H1 (cell line): ENCODE measurements at regions of chr10 and their contacts with region 1.

Region 1: DNA sequence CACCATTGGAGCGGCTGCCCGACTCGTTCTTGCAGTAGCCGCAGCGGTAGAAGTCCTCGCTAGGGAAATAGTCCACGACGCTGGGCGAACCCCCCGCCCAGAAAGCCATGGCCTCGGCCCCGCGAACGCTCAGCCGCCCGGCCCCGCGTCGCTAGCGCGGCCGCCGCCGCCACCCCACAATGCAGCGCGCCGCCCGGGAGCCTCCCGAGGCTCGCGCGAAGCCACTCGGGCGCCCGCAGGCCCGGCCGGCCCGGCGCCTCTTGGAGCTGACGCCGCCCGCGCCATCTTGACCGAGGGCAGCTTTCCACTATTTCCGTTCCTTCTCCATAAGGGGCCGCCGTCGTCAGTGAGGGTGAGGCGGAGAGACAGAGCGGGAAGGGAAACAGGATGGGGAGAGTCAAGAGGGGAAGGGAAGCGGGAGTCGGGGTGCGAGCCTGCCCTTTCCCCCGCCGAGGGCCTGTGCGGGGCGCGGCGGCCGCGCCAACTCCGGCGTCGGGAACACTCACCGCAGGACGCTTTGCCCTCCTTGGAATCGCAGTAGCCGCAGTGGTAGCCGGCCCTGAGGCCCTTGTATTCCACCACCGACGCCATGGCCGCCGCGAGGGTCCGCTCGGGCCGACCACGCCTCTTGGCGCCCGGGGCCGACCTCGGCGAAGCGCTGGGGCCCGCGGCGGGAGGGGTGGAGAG is at the start of gene ATE1:
- DNase-seq: peak; percentile 69 to 91
- H3K4me3 ChIP-seq: peak within 1 kb of the TSS; percentile 85 to 96 (median 90)
- H3K27ac ChIP-seq: peak within 1 kb of the TSS; percentile 100
- H3K4me1 ChIP-seq: peaks cover 0 to 7% (median 1%) of the 10 kb centered on the region in 4 experiments; a peak in 3 of 7 replicates
- H3K27me3 ChIP-seq: no peaks in the 10 kb centered on the region
- CTCF ChIP-seq: no peak
- EP300 ChIP-seq: peak in 1 of 2 experiments; percentile 10; a peak in 1 of 3 replicates
- POLR2A ChIP-seq: peak; percentile 90 to 98
- RAD21 ChIP-seq: peak; percentile 1 to 21; a peak in 3 of 4 replicates
- total RNA-seq, gene ATE1: 26.9 and 28.6 TPM in 2 replicates

Region 2: GRCh38 chr10:121947343-121948330 is 19.7 kb after region 1 on chr10:
- CTCF ChIA-PET with region 1: no interaction called
- POLR2A ChIA-PET with region 1: interaction called, 17 read pairs
- DNase-seq: no peak
- H3K4me3 ChIP-seq: no peak overlapping the region
- H3K27ac ChIP-seq: no peak overlapping the region; the same call in none of the 2 replicates
- H3K4me1 ChIP-seq: no peaks in the 10 kb centered on the region; a peak in 1 of 7 replicates
- H3K27me3 ChIP-seq: no peaks in the 10 kb centered on the region
- CTCF ChIP-seq: no peak
- EP300 ChIP-seq: no peak
- POLR2A ChIP-seq: no peak
- RAD21 ChIP-seq: no peak

Region 3: GRCh38 chr10:121974535-121975294 is 46.7 kb after region 1 on chr10 and contains the start of gene NSMCE4A:
- CTCF ChIA-PET with region 1: interaction called, 4 read pairs
- POLR2A ChIA-PET with region 1: interaction called, 18 read pairs
- DNase-seq: peak; percentile 43 to 88
- H3K4me3 ChIP-seq: peak within 1 kb of the TSS; percentile 77 to 93 (median 83)
- H3K27ac ChIP-seq: peak within 1 kb of the TSS; percentile 91
- H3K4me1 ChIP-seq: peaks cover 0 to 3% (median 1%) of the 10 kb centered on the region in 4 experiments; a peak in 2 of 7 replicates
- H3K27me3 ChIP-seq: no peaks in the 10 kb centered on the region
- CTCF ChIP-seq: peak; percentile 60 to 84 (median 73)
- EP300 ChIP-seq: no peak
- POLR2A ChIP-seq: peak in 1 of 2 experiments; percentile 93; a peak in 2 of 3 replicates
- RAD21 ChIP-seq: peak in 1 of 2 experiments; percentile 56; a peak in 2 of 4 replicates
- total RNA-seq, gene NSMCE4A: 65.5 and 66.0 TPM in 2 replicates